Upper lobe of right lung (tissue), 1 donor: ENCODE measurements at regions of chr4 and their contacts with region 1.

Region 1: DNA sequence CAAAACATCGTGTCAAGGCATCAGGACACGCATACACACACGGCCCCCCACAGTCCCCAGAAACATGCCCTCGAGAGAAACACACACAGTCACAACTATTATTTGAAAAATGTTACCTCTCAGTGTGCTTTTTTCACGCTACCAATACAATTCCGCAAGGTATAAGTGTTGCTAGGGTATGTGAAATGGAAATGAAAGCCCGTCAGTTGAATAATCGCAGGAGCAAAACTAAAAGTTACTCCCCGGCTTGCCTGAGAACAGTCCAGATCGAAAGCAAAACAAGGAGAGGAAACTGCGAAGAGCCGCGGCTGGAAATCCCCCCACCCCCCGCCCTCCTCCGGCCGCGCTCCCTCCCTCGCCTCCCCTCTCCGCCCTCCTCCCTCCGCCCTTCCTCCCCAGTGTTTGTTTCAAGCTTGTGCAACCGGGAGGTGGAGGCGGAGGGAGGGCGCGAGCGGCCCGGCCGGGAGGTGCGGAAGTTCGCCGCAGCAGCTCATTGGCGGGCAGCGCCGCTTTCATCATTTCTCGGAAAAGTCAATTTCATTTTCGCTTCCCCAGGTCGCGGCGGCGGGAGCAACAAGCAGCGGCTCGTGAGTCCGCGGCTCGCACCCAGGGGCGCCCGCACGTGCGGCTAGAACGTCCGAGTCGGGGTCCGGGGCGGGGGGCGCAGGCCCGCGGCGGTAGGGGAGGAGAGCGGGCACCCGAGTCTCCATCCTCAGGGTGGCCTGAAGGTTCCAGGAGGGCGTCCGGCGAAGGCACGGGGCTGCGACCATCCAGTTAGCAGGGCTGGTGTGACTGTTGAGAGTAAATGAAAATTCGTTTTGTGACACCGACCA is at the start of gene IRF2:
- DNase-seq: peak; percentile 99
- ATAC-seq: peak; percentile 92
- H3K4me3 ChIP-seq: peak within 1 kb of the TSS; percentile 79
- H3K27ac ChIP-seq: peak within 1 kb of the TSS; percentile 99
- H3K4me1 ChIP-seq: peaks cover 54% of the 10 kb centered on the region
- H3K27me3 ChIP-seq: no peaks in the 10 kb centered on the region
- CTCF ChIP-seq: no peak
- total RNA-seq, gene IRF2: 44.0 TPM

Region 2: GRCh38 chr4:184538023-184538599 is 63.6 kb after region 1 on chr4:
- intact Hi-C with region 1: loop called (anchors 10 kb)
- DNase-seq: peak; percentile 87
- ATAC-seq: peak; percentile 95
- H3K4me3 ChIP-seq: peak overlapping the region; percentile 82
- H3K27ac ChIP-seq: peak overlapping the region; percentile 98
- H3K4me1 ChIP-seq: peaks cover 34% of the 10 kb centered on the region
- H3K27me3 ChIP-seq: no peaks in the 10 kb centered on the region
- CTCF ChIP-seq: peak; percentile 69